ENCODE measurements at regions of chr1 and their contacts with region 1.

Region 1: GRCh38 chr1:108041360-108042142 is 76.6 kb upstream of the VAV3 start:
- H3K4me3 Mint-ChIP-seq: no peak overlapping the region
- H3K27ac Mint-ChIP-seq: peak overlapping the region; percentile 68
- H3K4me1 Mint-ChIP-seq: peaks cover 65% of the 10 kb centered on the region
- H3K27me3 Mint-ChIP-seq: no peaks in the 10 kb centered on the region

Region 2: DNA sequence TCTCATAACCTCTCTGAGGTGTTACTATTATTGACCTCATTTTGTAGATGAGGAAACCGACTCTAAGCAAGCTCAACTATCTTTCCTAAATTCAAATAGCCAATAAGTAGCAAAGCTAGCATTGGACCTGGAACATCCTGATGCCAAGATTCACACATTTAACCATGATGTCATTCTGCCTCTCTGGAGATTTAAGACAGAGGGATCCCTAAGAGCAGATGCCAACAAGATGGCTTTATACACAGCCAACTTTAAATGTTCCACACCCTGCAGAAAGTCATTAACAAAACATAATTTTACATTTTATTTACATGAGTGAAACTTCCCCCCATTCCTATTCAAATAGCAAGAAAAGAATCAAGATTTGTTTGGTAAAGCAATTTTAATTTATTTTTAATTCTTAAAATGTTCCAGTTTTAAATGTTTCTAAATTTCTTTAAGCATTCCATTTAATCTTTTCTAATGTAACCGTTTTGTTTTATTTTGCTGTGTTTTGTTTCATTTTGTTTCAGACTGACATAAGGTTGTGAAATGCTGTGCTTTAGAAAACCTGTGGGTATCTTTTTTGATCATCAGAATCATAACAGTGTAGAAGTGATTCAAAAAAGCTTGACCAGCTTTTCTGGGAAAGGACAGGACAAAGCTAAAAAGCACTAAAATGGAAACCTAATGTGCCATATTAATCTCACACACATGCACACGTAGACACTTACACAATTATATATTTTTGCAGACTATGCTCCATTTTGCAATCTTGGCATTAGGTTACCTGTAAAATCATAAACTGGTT is 69.0 kb before region 1 on chr1:
- intact Hi-C with region 1: loop called (anchors 5 kb)
- H3K4me3 Mint-ChIP-seq: no peak overlapping the region
- H3K27ac Mint-ChIP-seq: no peak overlapping the region
- H3K4me1 Mint-ChIP-seq: no peaks in the 10 kb centered on the region
- H3K27me3 Mint-ChIP-seq: no peaks in the 10 kb centered on the region

Region 3: GRCh38 chr1:107991371-107992066 is 50.0 kb before region 1 on chr1:
- intact Hi-C with region 1: no loop called
- H3K4me3 Mint-ChIP-seq: no peak overlapping the region
- H3K27ac Mint-ChIP-seq: no peak overlapping the region
- H3K4me1 Mint-ChIP-seq: no peaks in the 10 kb centered on the region
- H3K27me3 Mint-ChIP-seq: no peaks in the 10 kb centered on the region

Region 4: GRCh38 chr1:108009603-108010195 is 31.9 kb before region 1 on chr1:
- intact Hi-C with region 1: no loop called
- H3K4me3 Mint-ChIP-seq: no peak overlapping the region
- H3K27ac Mint-ChIP-seq: no peak overlapping the region
- H3K4me1 Mint-ChIP-seq: peaks cover 5% of the 10 kb centered on the region
- H3K27me3 Mint-ChIP-seq: no peaks in the 10 kb centered on the region

Region 5: GRCh38 chr1:108057541-108057940 is 16.0 kb after region 1 on chr1:
- intact Hi-C with region 1: no loop called
- H3K4me3 Mint-ChIP-seq: no peak overlapping the region
- H3K27ac Mint-ChIP-seq: peak overlapping the region; percentile 83
- H3K4me1 Mint-ChIP-seq: peaks cover 57% of the 10 kb centered on the region
- H3K27me3 Mint-ChIP-seq: no peaks in the 10 kb centered on the region

Measured in dendritic cell treated with granulocyte-macrophage colony-stimulating factor and Interleukin-4, amounts not matched to agents 40 ng/mL and 50 ng/mL, for 4 days (primary cell).